Esophagus squamous epithelium (tissue), 5 donors: ENCODE measurements at regions of chr5 and their contacts with region 1.

Region 1: GRCh38 chr5:54517174-54518092 is at the start of gene SNX18:
- DNase-seq: peak; percentile 67
- H3K4me3 ChIP-seq: peak within 1 kb of the TSS; percentile 75 to 99 (median 90)
- H3K27ac ChIP-seq: peak within 1 kb of the TSS; percentile 88 to 96 (median 92)
- H3K4me1 ChIP-seq: peaks cover 27 to 53% (median 30%) of the 10 kb centered on the region in 3 donors
- H3K27me3 ChIP-seq: no peaks in the 10 kb centered on the region
- CTCF ChIP-seq: peak; percentile 96 to 100 (median 99)
- POLR2A ChIP-seq: peak in 3 of 4 donors; percentile 31 to 85 (median 80)
- total RNA-seq, gene SNX18: 26.3 to 36.3 (median 30.6) TPM

Region 2: DNA sequence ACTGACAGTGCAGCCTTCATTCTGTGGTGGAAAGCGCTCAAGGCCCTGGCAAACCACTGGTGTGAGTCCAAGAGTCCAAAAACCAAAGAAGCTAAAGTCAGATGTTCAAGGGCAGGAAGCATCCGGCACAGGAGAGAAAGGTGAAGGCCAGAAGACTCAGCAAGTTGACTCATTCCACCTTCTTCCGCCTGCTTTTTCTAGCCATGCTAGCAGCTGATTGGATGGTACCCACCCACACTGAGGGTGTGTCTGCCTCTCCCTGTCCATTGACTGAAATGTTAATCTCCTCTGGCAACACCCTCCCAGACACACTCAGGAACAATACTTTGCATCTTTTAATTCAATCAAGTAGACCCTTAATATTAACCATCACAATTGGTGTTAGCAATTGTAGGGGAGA is 660.9 kb before region 1 on chr5:
- intact Hi-C with region 1: no loop called
- DNase-seq: no peak
- H3K4me3 ChIP-seq: no peak overlapping the region
- H3K27ac ChIP-seq: no peak overlapping the region
- H3K4me1 ChIP-seq: no peaks in the 10 kb centered on the region
- H3K27me3 ChIP-seq: no peaks in the 10 kb centered on the region
- CTCF ChIP-seq: no peak
- POLR2A ChIP-seq: no peak

Region 3: DNA sequence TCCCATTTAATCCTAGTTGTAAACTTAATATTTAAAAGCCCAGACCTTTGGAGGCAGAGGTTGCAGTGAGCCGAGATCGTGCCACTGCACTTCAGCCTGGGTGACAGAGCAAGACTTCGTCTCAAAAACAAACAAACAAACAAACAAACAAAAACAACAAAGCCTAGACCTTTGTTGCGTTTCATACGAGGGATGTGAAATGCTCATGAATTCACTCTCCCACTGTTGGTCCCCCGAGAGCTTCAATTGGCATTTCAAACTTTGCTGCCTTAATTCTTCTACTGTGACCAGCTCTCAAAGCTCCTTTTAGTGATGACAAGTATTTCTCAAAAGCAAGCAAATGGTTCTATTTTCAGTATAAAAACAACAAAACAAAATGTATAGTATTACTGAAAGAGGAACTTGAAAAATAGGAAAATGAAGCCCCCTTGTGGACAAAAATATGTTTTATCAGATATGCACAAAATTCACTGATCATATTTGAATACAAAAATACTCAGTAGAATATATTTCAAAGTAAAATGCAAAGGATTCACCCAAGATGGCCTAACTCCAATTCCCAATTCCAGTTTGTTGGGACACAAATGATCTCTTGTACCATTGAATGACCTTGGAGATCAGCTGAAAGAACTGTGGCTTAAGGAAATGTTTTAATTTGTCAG is 327.6 kb after region 1 on chr5:
- intact Hi-C with region 1: loop called (anchors 5 kb)
- DNase-seq: no peak
- H3K4me3 ChIP-seq: peak overlapping the region in 3 of 4 donors; percentile 16 to 29 (median 16)
- H3K27ac ChIP-seq: no peak overlapping the region
- H3K4me1 ChIP-seq: peaks cover 0 to 9% (median 0%) of the 10 kb centered on the region in 3 donors
- H3K27me3 ChIP-seq: no peaks in the 10 kb centered on the region
- CTCF ChIP-seq: peak; percentile 30 to 75 (median 59)
- POLR2A ChIP-seq: no peak

Region 4: DNA sequence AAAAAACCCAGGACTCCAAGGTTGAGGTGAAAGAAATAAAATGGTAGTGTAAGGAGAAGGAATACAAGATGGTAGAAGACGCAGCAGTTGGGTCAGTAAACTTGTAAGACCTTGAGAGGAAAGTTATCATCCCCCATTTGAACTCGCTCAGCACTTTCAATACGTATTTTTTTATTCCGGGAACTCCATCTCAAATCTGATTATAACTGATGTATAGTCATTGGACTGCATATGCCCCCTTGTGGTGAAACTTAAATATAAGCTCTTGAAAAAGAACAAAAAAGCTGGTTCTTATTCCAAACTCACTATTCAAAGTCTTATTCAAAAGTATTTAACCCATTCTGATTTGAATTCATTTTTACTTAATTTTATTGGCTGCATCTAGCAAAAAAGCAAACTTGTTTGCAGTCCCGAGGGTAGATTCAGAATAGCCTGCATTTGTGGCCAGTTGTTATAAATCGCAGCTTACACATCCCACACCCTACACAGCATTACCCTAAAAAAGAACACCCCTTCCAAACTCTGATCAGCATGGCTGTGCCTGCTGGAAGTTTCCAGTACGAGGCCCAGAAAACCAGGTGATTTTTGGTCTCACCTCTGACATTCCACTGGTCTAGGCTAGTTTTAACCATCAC is 350.0 kb after region 1 on chr5:
- intact Hi-C with region 1: loop called (anchors 5 kb)
- DNase-seq: no peak
- H3K4me3 ChIP-seq: peak overlapping the region in 1 of 4 donors; percentile 42
- H3K27ac ChIP-seq: no peak overlapping the region
- H3K4me1 ChIP-seq: peaks cover 0 to 4% (median 0%) of the 10 kb centered on the region in 3 donors
- H3K27me3 ChIP-seq: peaks cover 0 to 6% (median 0%) of the 10 kb centered on the region in 4 donors
- CTCF ChIP-seq: peak; percentile 37 to 75 (median 68)
- POLR2A ChIP-seq: no peak

Region 5: DNA sequence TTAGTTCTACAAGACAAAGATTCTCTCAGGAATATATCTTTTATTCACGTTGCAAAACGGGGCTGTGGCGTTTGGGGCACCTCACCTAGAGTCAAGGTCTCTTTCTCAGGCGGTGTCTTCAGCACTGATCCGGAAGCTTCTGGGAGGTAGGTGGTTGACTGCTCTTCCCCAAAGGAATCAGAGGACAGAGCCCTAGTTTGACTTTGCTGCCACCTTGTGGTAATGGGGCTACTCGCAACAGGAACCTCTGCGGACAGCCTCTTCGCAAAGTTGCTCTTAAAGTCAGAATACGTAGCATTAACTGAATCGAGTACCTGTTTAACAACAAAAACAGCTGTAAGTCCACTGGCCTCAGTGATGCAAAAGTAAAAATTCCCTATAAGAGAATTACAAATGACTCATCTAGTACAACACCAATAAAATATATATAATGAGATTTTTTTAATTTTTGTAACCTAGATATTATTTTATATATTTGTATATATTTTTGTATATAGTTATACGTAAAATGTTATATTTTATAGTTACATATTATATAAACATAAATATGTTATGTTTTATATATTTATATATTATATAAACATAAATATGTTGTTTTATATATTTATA is 629.2 kb after region 1 on chr5:
- intact Hi-C with region 1: loop called (anchors 10 kb)
- DNase-seq: no peak
- H3K4me3 ChIP-seq: no peak overlapping the region
- H3K27ac ChIP-seq: no peak overlapping the region
- H3K4me1 ChIP-seq: peaks cover 0 to 19% (median 2%) of the 10 kb centered on the region in 3 donors
- H3K27me3 ChIP-seq: peaks cover 0 to 57% (median 2%) of the 10 kb centered on the region in 4 donors
- CTCF ChIP-seq: peak; percentile 78 to 92 (median 87)
- POLR2A ChIP-seq: no peak

Region 6: DNA sequence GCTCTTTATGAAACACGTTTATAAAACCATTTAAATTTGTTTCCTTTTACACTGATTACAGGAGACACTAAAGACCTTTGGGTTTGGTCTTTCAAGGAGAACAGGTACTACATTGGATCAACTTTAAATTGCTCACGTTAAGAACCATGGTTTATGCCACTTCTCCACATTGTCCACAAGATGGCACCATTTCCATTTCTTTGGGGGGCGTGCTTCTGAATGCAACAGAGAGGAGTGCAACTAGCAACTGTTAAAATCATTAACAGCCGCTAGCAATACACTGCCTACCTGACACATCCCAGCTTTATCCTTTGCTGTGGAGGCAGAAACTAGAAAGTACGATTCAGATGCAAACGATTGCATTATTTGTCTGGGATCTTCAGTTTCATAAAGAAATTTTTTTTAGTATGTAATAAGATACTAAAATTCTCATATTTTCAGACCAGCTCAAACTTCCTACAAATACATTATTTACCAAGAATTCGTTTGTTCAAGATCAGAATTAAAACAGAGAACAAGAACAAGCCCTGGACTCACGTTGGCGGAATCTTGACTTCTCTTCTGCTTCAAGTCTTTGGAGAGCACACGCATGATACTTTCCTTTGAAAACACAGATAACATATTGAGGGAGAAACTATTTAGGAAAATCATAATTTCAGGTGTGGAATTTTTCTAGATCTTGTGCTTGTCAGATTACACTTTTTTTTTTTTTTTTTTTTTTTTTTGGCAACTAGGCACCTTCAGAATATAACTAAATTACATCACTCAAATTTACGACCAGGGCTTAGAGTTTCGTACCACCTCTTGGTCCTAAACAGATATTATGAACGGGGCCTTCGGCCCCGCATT is 654.8 kb after region 1 on chr5:
- intact Hi-C with region 1: no loop called
- DNase-seq: peak; percentile 2
- H3K4me3 ChIP-seq: peak overlapping the region; percentile 25 to 66 (median 48)
- H3K27ac ChIP-seq: no peak overlapping the region
- H3K4me1 ChIP-seq: peaks cover 11 to 40% (median 26%) of the 10 kb centered on the region in 3 donors
- H3K27me3 ChIP-seq: peaks cover 3 to 69% (median 22%) of the 10 kb centered on the region in 4 donors
- CTCF ChIP-seq: peak; percentile 71 to 91 (median 81)
- POLR2A ChIP-seq: no peak